ENCODE measurements at regions of chr11 and their contacts with region 1.

Region 1: GRCh38 chr11:68669301-68670090 is 14.8 kb upstream of the GAL start:
- H3K4me3 ChIP-seq: no peak overlapping the region
- H3K27ac ChIP-seq: no peak overlapping the region
- H3K4me1 ChIP-seq: no peaks in the 10 kb centered on the region
- CTCF ChIP-seq: no peak

Region 2: DNA sequence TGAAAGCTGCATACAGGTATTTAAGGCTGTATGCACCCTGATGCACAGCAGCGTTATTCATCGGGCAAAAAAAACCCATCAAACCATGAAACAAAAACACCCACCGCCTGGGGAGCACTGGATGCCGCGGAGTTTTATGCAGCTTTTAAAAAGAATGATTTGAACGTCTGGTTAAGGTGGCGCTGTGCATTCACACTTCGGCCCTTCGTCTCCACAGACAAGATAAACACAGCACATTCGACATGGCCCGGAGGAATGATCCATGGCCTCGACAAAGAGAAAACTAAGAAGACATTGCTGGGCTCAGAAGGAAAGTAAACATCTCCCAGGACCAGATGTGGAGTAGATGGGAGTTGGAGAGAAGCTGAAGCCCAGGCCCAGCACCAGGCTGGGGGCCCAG is 25.9 kb before region 1 on chr11:
- CTCF ChIA-PET with region 1: no interaction called
- POLR2A ChIA-PET with region 1: no interaction called
- H3K4me3 ChIP-seq: no peak overlapping the region
- H3K27ac ChIP-seq: no peak overlapping the region
- H3K4me1 ChIP-seq: no peaks in the 10 kb centered on the region
- CTCF ChIP-seq: peak; percentile 40

Region 3: GRCh38 chr11:68704887-68705286 is 35.4 kb after region 1 on chr11:
- CTCF ChIA-PET with region 1: interaction called, 10 read pairs
- POLR2A ChIA-PET with region 1: no interaction called
- H3K4me3 ChIP-seq: no peak overlapping the region
- H3K27ac ChIP-seq: no peak overlapping the region
- H3K4me1 ChIP-seq: no peaks in the 10 kb centered on the region
- CTCF ChIP-seq: no peak

Region 4: DNA sequence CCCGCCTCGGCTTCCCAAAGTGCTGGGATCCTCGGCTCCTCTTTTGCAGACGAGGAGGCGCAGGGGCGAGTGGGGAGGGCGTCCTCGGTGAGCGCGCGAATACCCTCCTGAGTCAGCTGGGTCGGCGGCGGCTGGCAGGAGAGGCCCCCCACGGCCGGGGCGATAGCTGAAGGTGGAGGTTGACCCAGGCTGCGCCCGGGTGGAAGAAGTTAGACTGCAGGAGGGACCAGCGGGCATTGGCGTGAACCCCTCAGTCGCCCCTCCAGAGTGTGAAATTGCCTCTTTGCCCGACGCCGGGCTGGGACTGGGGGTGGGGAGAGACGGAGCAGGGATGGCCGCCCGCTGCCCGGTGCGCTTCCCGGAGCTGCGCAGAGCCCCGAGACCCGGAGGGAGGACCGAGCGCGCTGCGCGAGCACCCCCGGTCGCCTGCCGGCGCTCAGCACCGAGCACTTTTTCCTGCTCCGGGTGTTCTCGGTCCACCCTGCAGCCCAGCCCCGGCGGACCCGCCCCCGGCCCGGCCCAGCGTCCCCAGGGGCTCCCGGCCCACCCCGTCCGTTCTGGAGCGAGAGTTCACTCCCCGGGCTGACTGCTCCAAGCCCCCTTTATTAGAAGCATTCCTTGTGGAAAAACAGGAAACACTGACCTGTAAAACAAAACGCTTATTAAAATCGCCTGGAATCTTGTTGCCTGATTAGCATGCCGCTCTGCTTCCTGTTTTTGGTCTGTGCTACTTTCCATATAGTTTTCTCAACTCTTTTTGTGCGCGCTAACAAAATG is 185.9 kb after region 1 on chr11:
- CTCF ChIA-PET with region 1: no interaction called
- POLR2A ChIA-PET with region 1: no interaction called
- H3K4me3 ChIP-seq: no peak overlapping the region; the same call in 1 of the 2 replicates
- H3K27ac ChIP-seq: no peak overlapping the region
- H3K4me1 ChIP-seq: no peaks in the 10 kb centered on the region
- CTCF ChIP-seq: 0 out of 2 replicates have a peak, but pooled peaks have one; percentile 47

Measured in HEK293 (cell line).